ENCODE measurements at regions of chr5 and their contacts with region 1.

Region 1: GRCh38 chr5:157130925-157131324 is 11.7 kb downstream of the MED7 start:
- DNase-seq: no peak
- H3K4me3 Mint-ChIP-seq: no peak overlapping the region
- H3K27ac Mint-ChIP-seq: no peak overlapping the region
- H3K4me1 Mint-ChIP-seq: peaks cover 23% of the 10 kb centered on the region
- H3K27me3 Mint-ChIP-seq: no peaks in the 10 kb centered on the region

Region 2: GRCh38 chr5:155616779-155617392 is 1514.0 kb before region 1 on chr5:
- CTCF ChIA-PET with region 1: interaction called, 6 read pairs
- POLR2A ChIA-PET with region 1: no interaction called
- intact Hi-C with region 1: loop called (anchors 5 kb)
- DNase-seq: peak; percentile 62
- H3K4me3 Mint-ChIP-seq: no peak overlapping the region
- H3K27ac Mint-ChIP-seq: no peak overlapping the region
- H3K4me1 Mint-ChIP-seq: no peaks in the 10 kb centered on the region
- H3K27me3 Mint-ChIP-seq: peaks cover 15% of the 10 kb centered on the region

Region 3: GRCh38 chr5:156815988-156816599 is 314.8 kb before region 1 on chr5:
- CTCF ChIA-PET with region 1: no interaction called
- POLR2A ChIA-PET with region 1: no interaction called
- intact Hi-C with region 1: loop called (anchors 1 kb)
- DNase-seq: peak; percentile 53
- H3K4me3 Mint-ChIP-seq: no peak overlapping the region
- H3K27ac Mint-ChIP-seq: no peak overlapping the region
- H3K4me1 Mint-ChIP-seq: no peaks in the 10 kb centered on the region
- H3K27me3 Mint-ChIP-seq: no peaks in the 10 kb centered on the region

Region 4: DNA sequence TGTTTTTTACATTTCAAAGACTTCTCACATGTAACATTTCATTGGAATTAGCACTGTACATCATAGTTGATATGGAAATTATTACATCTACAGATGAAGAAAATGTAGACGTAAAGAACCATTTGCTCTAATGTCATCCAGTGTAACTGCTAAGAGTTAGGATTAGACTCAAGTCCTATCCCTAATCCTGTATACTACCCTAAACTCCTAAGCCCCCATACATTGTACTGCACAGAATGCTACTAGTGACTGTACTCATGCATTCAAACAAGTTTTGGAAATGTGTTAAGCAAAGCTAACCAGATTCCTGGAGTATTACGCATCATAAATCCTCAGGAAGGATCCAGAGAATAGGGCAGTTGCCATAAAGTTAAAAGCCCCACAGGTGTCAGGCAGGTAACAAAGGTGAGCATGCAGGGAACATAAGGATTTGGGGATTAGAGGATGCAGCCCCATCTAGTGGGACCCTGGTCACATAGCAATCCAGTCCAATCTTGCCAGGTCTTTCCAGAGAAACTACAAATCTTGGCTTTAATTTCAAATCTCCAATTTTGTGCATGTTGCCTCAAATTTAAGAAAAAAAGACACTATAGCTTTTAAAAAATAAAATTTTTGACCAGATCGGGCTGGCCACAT is 104.0 kb before region 1 on chr5:
- CTCF ChIA-PET with region 1: interaction called, 6 read pairs
- POLR2A ChIA-PET with region 1: interaction called, 4 read pairs
- intact Hi-C with region 1: loop called (anchors 1 kb)
- DNase-seq: peak; percentile 12
- H3K4me3 Mint-ChIP-seq: no peak overlapping the region
- H3K27ac Mint-ChIP-seq: no peak overlapping the region
- H3K4me1 Mint-ChIP-seq: peaks cover 36% of the 10 kb centered on the region
- H3K27me3 Mint-ChIP-seq: no peaks in the 10 kb centered on the region

Region 5: GRCh38 chr5:157108976-157109375 is 21.9 kb before region 1 on chr5 and contains the start of gene HAVCR2:
- CTCF ChIA-PET with region 1: interaction called, 20 read pairs
- POLR2A ChIA-PET with region 1: interaction called, 3 read pairs
- intact Hi-C with region 1: loop called (anchors 2 kb)
- DNase-seq: peak; percentile 84
- H3K4me3 Mint-ChIP-seq: peak within 1 kb of the TSS; percentile 79
- H3K27ac Mint-ChIP-seq: peak within 1 kb of the TSS; percentile 95
- H3K4me1 Mint-ChIP-seq: peaks cover 40% of the 10 kb centered on the region
- H3K27me3 Mint-ChIP-seq: no peaks in the 10 kb centered on the region
- total RNA-seq, gene HAVCR2: 23.2 to 24.3 TPM

Region 6: GRCh38 chr5:157142317-157143126 is 11.6 kb after region 1 on chr5 and contains the start of gene MED7:
- CTCF ChIA-PET with region 1: interaction called, 10 read pairs
- POLR2A ChIA-PET with region 1: interaction called, 3 read pairs
- intact Hi-C with region 1: no loop called
- DNase-seq: peak; percentile 96
- H3K4me3 Mint-ChIP-seq: peak within 1 kb of the TSS; percentile 96
- H3K27ac Mint-ChIP-seq: peak within 1 kb of the TSS; percentile 99
- H3K4me1 Mint-ChIP-seq: peaks cover 49% of the 10 kb centered on the region
- H3K27me3 Mint-ChIP-seq: no peaks in the 10 kb centered on the region
- total RNA-seq, gene MED7: 17.2 to 19.2 TPM